Gastrocnemius medialis (tissue), 4 donors: ENCODE measurements at regions of chr2 and their contacts with region 1.

Region 1: DNA sequence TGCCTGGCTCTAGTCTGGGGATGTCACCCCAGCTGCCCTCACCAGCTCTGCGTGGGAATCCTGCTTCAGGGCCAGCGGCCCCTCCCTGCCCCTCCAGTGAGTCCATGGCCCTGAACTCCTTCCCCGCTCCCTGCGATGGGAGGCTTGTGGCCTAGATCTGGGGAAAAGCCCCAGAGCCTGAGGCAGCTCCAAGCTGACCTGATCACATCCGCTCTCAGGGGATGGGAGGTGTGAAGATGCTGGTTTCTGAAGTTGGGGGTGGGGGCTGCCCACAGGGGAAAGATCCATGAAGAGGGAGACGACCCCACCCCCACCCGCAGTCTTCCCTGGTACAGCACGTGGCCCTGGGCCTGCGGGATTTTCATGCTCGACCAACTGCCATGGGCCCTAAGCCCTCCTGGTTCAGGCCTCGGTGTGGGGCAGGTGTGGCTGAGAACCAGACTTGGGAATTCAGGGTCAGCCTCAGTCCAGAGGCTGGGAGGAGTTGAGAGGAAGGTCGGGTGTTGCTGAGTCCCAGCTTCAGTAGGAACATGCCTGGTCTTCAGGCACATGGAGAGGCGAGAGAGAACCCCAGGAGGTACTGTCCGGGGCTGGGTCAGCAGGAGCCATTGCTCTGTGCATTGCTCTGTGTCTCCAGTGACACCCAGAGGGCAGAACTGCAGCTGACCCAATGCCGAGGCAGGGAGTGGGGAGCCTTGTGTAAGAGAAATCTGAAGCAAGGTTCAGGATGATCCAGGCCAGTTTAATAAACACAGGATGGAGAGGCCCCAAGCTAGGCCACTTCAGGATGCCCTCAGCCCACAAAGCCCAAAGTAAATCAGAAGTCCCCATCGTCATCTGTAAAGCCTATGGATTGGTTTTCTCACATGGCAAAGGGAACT is 115.1 kb downstream of the CAPN13 start:
- DNase-seq: peak in 1 of 2 donors; percentile 28
- ATAC-seq: peak; percentile 53 to 55
- H3K4me3 ChIP-seq: no peak overlapping the region
- H3K27ac ChIP-seq: no peak overlapping the region
- H3K4me1 ChIP-seq: peaks cover 21 to 33% of the 10 kb centered on the region in 2 donors
- H3K27me3 ChIP-seq: no peaks in the 10 kb centered on the region
- CTCF ChIP-seq: peak in 3 of 5 experiments; percentile 11 to 40 (median 39)
- POLR2A ChIP-seq: no peak

Region 2: DNA sequence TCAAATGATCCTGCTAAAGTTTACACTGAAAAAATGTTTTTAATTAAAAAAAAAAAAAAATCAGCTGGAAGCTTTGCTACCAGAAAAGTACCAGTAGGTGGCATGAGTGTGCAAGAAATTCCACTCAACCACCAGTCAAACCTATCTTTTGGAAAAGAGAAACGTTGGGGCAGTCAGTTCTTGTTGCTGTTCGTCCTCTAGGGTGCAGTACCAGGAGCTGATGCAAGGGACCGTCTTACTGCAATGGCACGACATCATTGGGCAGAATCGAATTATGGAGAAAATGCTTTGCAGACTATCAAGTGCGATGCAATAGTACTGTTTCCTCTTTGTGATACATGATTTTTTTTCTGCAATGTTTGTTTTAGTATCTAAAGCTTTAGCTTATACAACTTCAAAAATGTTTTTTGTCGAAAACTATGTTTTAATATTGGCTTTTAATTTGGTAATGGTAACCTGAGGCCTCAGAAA is 527.1 kb before region 1 on chr2:
- in situ Hi-C with region 1: no loop called
- intact Hi-C with region 1: loop called (anchors 5 kb)
- DNase-seq: peak; percentile 20 to 59
- ATAC-seq: peak; percentile 83 to 96
- H3K4me3 ChIP-seq: no peak overlapping the region
- H3K27ac ChIP-seq: no peak overlapping the region
- H3K4me1 ChIP-seq: peaks cover 3 to 9% of the 10 kb centered on the region in 2 donors
- H3K27me3 ChIP-seq: no peaks in the 10 kb centered on the region
- CTCF ChIP-seq: peak; percentile 62 to 88 (median 78)
- POLR2A ChIP-seq: no peak

Region 3: GRCh38 chr2:30208452-30208851 is 483.7 kb before region 1 on chr2:
- in situ Hi-C with region 1: no loop called
- intact Hi-C with region 1: loop called (anchors 5 kb)
- DNase-seq: peak; percentile 35 to 53
- ATAC-seq: peak; percentile 89
- H3K4me3 ChIP-seq: no peak overlapping the region
- H3K27ac ChIP-seq: no peak overlapping the region
- H3K4me1 ChIP-seq: no peaks in the 10 kb centered on the region
- H3K27me3 ChIP-seq: no peaks in the 10 kb centered on the region
- CTCF ChIP-seq: peak; percentile 79 to 92 (median 82)
- POLR2A ChIP-seq: no peak

Region 4: DNA sequence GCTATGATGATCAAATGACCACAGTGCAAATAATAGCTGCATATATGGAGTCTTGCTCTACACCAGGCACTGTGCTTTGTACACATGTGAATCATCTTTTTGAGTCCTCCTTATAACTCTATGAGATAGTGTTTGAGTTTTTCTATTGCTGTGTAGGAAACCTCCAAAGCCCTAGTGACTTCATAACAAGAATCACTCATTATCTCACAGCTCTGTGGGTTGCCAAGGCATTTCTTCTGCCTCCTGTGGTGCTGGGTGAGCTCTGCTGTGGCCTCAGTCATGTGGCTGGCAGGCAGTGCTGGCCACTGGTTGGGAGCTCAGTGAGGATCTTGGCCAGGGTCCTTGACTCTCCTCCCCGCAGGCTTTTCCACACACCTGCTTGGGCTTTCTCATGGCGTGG is 38.3 kb before region 1 on chr2:
- in situ Hi-C with region 1: no loop called
- intact Hi-C with region 1: loop called (anchors 5 kb)
- DNase-seq: peak in 1 of 2 donors; percentile 39
- ATAC-seq: peak; percentile 42 to 44
- H3K4me3 ChIP-seq: no peak overlapping the region
- H3K27ac ChIP-seq: no peak overlapping the region
- H3K4me1 ChIP-seq: peaks cover 13 to 20% of the 10 kb centered on the region in 2 donors
- H3K27me3 ChIP-seq: no peaks in the 10 kb centered on the region
- CTCF ChIP-seq: no peak
- POLR2A ChIP-seq: no peak